Sigmoid colon (tissue), 7 donors: ENCODE measurements at regions of chr6 and their contacts with region 1.

Region 1: DNA sequence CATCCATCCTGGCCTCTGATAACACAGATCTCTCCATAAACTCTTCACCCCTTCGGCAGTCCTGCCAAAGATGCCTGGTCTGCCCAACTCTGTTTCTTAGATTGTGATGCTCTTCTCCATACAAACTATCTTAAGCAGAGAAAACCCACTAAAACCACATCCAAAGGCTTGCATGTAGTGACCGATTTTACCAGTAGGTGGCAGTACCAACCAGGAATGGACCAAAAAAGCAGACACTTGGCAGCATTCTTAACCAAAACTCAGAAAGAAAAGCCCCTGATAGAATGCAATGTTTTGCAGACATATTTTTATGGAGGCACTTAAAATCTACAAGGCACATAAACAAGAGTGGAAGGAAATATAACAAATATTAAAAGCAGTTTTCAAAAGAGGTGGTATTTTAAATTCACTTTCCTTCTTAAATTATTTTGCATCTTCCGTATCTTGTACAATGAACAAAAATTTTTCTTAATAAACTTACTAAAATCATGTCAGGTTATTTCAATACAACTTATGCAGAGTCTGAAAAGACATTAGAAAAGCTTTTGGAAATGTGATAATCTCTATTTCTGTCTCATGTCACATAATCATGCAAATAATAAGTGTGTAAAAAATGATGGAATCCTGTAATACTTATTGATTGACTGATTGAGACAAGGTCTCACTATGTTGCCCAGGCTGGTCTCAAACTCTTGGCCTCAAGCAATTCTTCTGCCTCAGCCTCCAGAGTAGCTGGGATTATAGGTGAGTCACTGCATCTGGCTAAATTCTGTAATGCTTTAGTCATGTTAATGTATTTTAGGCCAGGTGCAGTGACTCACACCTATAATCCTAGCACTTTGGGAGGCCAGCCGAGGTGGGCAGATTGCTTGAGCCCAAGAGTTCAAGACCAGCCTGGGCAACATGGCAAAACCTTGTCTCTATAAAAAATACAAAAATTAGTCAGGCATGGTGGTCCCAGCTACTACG is 29.4 kb downstream of the LRP11 start:
- DNase-seq: no peak
- H3K4me3 ChIP-seq: no peak overlapping the region
- H3K27ac ChIP-seq: no peak overlapping the region
- H3K4me1 ChIP-seq: no peaks in the 10 kb centered on the region
- H3K27me3 ChIP-seq: no peaks in the 10 kb centered on the region
- CTCF ChIP-seq: peak; percentile 76 to 95 (median 92)
- EP300 ChIP-seq: no peak
- POLR2A ChIP-seq: no peak

Region 2: GRCh38 chr6:149863697-149864577 is 29.1 kb after region 1 on chr6 and contains the start of gene LRP11:
- intact Hi-C with region 1: loop called (anchors 1 kb)
- DNase-seq: peak; percentile 93
- H3K4me3 ChIP-seq: peak within 1 kb of the TSS; percentile 30 to 89 (median 72)
- H3K27ac ChIP-seq: peak within 1 kb of the TSS; percentile 90 to 97 (median 94)
- H3K4me1 ChIP-seq: peaks cover 0 to 29% (median 19%) of the 10 kb centered on the region in 4 donors
- H3K27me3 ChIP-seq: no peaks in the 10 kb centered on the region
- CTCF ChIP-seq: no peak
- EP300 ChIP-seq: no peak
- POLR2A ChIP-seq: no peak
- total RNA-seq, gene LRP11: 17.2 to 71.7 (median 21.5) TPM

Region 3: DNA sequence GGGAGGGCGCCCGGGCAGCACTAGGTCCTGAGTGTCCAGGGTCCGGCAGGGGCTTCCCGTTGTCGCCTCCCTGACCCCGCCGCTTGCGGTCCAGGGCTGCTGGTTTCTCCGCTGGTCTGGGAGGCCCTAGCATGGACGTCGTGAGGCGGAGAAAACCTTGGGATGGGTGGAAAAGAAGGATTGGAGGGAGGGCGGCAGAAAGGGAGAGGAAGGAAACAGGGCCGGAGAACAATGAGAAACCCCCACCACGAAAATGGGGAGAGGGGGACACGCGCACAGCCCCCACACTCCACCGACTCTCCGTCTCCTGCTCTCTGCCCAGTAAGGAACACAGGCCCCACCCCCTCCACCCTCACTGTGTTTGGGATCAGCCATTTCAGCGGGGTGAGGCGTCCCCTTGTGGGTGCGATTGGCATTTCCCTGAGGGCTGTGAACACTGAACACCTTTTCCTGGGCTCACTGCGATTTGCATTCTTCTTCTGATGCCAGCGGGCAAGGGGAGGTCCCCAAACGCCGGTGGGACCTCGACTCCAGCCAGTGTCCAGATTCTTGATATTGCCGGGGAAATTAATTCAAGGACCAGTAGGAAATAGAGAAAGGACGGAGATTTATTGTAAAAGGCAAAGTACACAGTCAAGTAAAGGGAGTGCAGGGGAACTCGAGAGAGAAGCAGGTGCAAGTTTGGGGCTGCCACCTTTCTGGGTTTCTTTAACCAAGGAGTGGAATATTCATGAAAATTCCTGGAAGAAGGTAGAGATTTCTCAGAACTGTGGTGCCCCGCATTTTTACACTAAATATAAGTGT is 91.4 kb after region 1 on chr6:
- intact Hi-C with region 1: loop called (anchors 1 kb)
- DNase-seq: peak; percentile 94
- H3K4me3 ChIP-seq: peak overlapping the region; percentile 33 to 58 (median 50)
- H3K27ac ChIP-seq: peak overlapping the region in 3 of 4 donors; percentile 27 to 65 (median 33)
- H3K4me1 ChIP-seq: peaks cover 0 to 31% (median 25%) of the 10 kb centered on the region in 4 donors
- H3K27me3 ChIP-seq: peaks cover 0 to 30% (median 17%) of the 10 kb centered on the region in 3 donors
- CTCF ChIP-seq: peak; percentile 94 to 98 (median 96)
- EP300 ChIP-seq: no peak
- POLR2A ChIP-seq: no peak

Region 4: DNA sequence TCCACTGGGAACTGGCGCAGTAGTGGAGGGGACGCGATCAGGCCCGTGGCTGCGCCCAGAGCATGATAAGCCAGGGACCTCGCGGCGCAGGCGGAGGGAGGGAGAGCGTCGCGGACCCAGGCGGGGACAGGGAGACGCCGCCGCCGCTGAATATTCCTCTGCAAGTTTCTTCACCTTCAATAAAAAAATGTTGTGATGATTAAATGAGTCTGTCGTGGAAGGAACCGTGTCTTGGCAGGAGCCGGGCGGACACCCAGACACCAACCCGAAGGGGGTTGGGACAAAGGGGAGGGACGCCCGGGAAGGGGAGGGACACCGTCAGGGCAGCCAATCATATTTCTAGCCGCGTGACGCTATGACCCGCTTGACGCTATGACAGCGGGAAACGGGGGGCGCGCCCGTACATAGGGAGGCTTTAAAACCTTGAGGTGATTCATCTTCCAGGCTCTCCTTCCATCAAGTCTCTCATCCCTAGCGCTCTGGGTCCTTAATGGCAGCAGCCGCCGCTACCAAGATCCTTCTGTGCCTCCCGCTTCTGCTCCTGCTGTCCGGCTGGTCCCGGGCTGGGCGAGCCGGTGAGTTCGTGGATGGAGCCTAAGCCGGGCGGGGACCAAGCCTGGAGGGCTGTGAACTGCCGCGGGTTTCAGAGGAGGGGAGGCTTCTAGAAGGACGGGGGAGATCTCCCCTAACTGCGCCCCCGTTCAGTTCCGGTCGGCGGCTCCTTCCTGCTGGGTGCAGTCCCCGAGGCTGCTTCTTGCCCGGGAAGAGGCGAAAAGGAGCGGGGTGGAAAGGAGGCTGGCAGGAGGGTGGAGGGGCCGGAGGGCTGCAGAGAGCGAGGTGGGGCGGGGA is 107.0 kb after region 1 on chr6 and contains the start of gene ULBP2:
- intact Hi-C with region 1: no loop called
- DNase-seq: peak; percentile 86
- H3K4me3 ChIP-seq: peak within 1 kb of the TSS; percentile 22 to 50 (median 39)
- H3K27ac ChIP-seq: no peak within 1 kb of the TSS
- H3K4me1 ChIP-seq: peaks cover 0 to 34% (median 26%) of the 10 kb centered on the region in 4 donors
- H3K27me3 ChIP-seq: peaks cover 33 to 71% (median 56%) of the 10 kb centered on the region in 3 donors
- CTCF ChIP-seq: no peak
- EP300 ChIP-seq: no peak
- POLR2A ChIP-seq: no peak
- total RNA-seq, gene ULBP2: not detected

Region 5: GRCh38 chr6:150016324-150017185 is 181.8 kb after region 1 on chr6:
- intact Hi-C with region 1: loop called (anchors 2 kb)
- DNase-seq: no peak
- H3K4me3 ChIP-seq: no peak overlapping the region
- H3K27ac ChIP-seq: no peak overlapping the region
- H3K4me1 ChIP-seq: peaks cover 0 to 12% (median 0%) of the 10 kb centered on the region in 4 donors
- H3K27me3 ChIP-seq: peaks cover 27 to 73% (median 47%) of the 10 kb centered on the region in 3 donors
- CTCF ChIP-seq: peak; percentile 56 to 76 (median 68)
- EP300 ChIP-seq: no peak
- POLR2A ChIP-seq: no peak